Activated B cell treated with CpG ODN at 0.5 μM for 24 hours (primary cell): ENCODE measurements at regions of chr6 and their contacts with region 1.

Region 1: GRCh38 chr6:31680840-31681671 is at the start of gene LY6G5C:
- DNase-seq: peak; percentile 46
- ATAC-seq: peak; percentile 75
- H3K4me3 Mint-ChIP-seq: peak within 1 kb of the TSS; percentile 84
- H3K27ac Mint-ChIP-seq: peak within 1 kb of the TSS; percentile 72
- H3K4me1 Mint-ChIP-seq: peaks cover 40% of the 10 kb centered on the region
- H3K27me3 Mint-ChIP-seq: no peaks in the 10 kb centered on the region
- CTCF ChIP-seq: no peak
- total RNA-seq, gene LY6G5C: 0.29 and 0.73 TPM in 2 replicates

Region 2: GRCh38 chr6:31356946-31357466 is 324.1 kb before region 1 on chr6 and contains the start of gene HLA-B:
- CTCF ChIA-PET with region 1: no interaction called
- POLR2A ChIA-PET with region 1: no interaction called
- intact Hi-C with region 1: no loop called
- DNase-seq: peak; percentile 64
- ATAC-seq: peak; percentile 85
- H3K4me3 Mint-ChIP-seq: peak within 1 kb of the TSS; percentile 95
- H3K27ac Mint-ChIP-seq: peak within 1 kb of the TSS; percentile 100
- H3K4me1 Mint-ChIP-seq: peaks cover 54% of the 10 kb centered on the region
- H3K27me3 Mint-ChIP-seq: no peaks in the 10 kb centered on the region
- CTCF ChIP-seq: no peak
- total RNA-seq, gene HLA-B: 3,667 and 3,668 TPM in 2 replicates

Region 3: DNA sequence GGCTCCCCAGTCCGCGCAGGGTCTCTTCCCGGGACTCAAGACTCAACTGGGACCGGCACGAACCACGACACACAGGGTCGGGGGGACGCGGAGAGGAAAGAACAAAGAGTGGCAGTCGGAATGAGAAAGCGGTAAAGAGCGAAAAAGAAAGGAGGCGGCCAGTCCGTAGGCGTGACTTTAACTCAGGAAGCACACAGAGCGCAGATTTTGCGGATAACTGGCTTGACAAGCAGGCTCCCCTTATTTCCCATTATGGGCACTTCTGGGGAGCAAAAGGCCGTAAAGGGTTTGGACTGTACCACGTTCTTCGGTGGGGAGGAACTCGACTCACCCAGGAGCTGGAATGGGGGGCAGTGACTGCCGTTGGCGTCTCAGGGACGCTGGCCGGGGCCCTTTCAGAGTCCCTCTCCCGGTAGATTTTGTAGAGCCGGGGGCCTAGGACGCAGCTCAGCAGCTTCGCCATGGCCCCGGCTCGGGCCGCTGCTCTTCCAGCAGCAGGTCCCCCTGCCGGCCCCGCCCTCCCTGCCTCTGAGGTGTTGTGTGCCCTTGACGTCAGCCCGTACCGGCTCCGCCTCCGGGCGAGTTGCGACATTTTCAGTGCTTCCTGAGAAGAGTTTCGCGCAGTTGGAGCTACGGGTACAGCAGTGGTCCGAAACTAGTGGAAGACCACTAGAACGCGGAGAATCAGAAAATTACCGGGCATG is 21.9 kb after region 1 on chr6 and contains the start of gene ABHD16A:
- CTCF ChIA-PET with region 1: no interaction called
- POLR2A ChIA-PET with region 1: interaction called, 5 read pairs
- intact Hi-C with region 1: loop called (anchors 2 kb)
- DNase-seq: peak; percentile 94
- ATAC-seq: peak; percentile 93
- H3K4me3 Mint-ChIP-seq: peak within 1 kb of the TSS; percentile 99
- H3K27ac Mint-ChIP-seq: peak within 1 kb of the TSS; percentile 89
- H3K4me1 Mint-ChIP-seq: peaks cover 28% of the 10 kb centered on the region
- H3K27me3 Mint-ChIP-seq: no peaks in the 10 kb centered on the region
- CTCF ChIP-seq: no peak
- total RNA-seq, gene ABHD16A: 49.3 and 59.1 TPM in 2 replicates

Region 4: GRCh38 chr6:31769684-31770371 is 88.8 kb after region 1 on chr6:
- CTCF ChIA-PET with region 1: interaction called, 9 read pairs
- POLR2A ChIA-PET with region 1: interaction called, 5 read pairs
- intact Hi-C with region 1: loop called (anchors 1 kb)
- DNase-seq: peak; percentile 76
- ATAC-seq: peak; percentile 98
- H3K4me3 Mint-ChIP-seq: no peak overlapping the region
- H3K27ac Mint-ChIP-seq: no peak overlapping the region
- H3K4me1 Mint-ChIP-seq: peaks cover 16% of the 10 kb centered on the region
- H3K27me3 Mint-ChIP-seq: no peaks in the 10 kb centered on the region
- CTCF ChIP-seq: no peak

Region 5: DNA sequence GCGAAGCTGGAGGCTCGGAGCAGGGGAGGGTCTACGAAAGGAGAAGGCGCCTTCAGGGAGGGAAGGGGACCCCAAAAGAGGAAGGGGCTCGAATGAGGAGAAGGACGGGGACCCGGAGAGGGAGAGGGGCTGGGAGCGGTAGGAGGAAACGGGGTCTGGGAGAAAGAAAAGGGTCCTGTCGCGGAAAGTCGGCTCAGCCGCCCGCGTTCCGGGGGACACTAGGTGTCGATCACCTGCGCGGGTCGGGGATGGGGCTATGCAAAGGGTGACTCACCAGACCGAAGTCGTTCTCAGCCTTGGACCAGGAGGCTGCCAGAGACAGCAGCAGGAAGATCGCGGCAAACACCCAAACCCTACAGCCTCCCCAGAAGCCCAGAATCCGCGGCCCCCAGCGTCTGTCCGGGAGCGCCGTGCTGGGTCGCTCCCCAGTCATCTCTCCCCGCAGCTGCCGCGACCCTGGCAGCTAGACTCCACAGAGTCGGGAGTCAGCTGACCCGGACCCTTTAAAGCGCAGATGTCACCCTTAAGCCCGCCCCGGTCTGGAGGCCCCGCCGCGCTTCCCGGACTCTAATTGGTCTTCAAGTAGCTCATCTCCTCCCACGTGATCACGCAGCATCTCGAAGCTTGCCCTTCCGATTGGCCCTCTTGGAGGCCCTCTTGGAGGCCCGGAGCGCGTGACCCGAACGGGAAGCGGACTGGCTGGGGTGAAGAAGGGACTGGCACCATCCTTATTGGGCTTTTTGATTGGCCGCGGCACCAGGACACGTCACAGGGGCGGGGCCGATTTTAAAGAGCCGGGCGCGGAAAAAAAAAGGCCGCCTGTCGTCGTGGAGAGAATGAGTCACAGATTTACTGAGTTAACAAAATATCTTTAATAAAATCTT is 181.5 kb after region 1 on chr6 and contains the start of gene NEU1:
- CTCF ChIA-PET with region 1: no interaction called
- POLR2A ChIA-PET with region 1: no interaction called
- intact Hi-C with region 1: loop called (anchors 1 kb)
- DNase-seq: peak; percentile 93
- ATAC-seq: peak; percentile 91
- H3K4me3 Mint-ChIP-seq: peak within 1 kb of the TSS; percentile 95
- H3K27ac Mint-ChIP-seq: peak within 1 kb of the TSS; percentile 93
- H3K4me1 Mint-ChIP-seq: peaks cover 21% of the 10 kb centered on the region
- H3K27me3 Mint-ChIP-seq: no peaks in the 10 kb centered on the region
- CTCF ChIP-seq: no peak
- total RNA-seq, gene NEU1: 18.3 and 19.2 TPM in 2 replicates

Region 6: GRCh38 chr6:31888276-31889258 is 207.5 kb after region 1 on chr6:
- CTCF ChIA-PET with region 1: interaction called, 5 read pairs
- POLR2A ChIA-PET with region 1: no interaction called
- intact Hi-C with region 1: loop called (anchors 2 kb)
- DNase-seq: peak; percentile 56
- ATAC-seq: peak; percentile 50
- H3K4me3 Mint-ChIP-seq: no peak overlapping the region
- H3K27ac Mint-ChIP-seq: no peak overlapping the region
- H3K4me1 Mint-ChIP-seq: no peaks in the 10 kb centered on the region
- H3K27me3 Mint-ChIP-seq: no peaks in the 10 kb centered on the region
- CTCF ChIP-seq: peak; percentile 69

Region 7: DNA sequence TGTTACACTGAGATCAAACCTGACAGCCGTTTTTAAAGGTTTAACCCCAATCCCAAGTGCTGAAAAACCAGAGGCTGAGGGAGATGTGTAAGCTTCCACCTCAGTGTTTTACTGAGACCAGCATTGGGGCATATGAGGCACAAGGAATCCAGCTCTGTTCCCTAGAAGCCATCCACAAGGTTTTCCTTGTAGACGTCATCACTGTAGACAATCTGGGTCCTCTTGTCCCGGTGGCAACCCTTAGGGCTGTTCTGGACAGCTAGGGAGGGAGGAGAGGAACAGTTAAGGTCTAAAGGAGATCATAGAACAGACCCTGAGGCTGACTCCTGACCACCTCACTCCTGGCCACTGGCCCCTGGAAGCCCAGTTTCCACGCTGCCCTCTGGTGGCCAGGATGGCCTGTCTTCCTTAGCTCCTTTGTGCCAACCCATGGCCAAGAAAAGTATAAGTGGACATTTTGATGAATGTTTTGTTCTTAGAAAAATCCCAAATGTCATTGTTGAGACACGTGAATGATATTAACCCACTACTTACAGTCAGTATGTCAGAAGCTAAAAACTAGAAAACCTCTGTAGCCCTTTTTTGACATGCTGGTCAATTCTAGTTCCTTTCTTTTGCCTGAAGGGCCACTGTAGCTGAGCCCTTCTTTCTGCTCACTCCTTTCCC is 271.2 kb after region 1 on chr6:
- CTCF ChIA-PET with region 1: interaction called, 9 read pairs
- POLR2A ChIA-PET with region 1: no interaction called
- intact Hi-C with region 1: loop called (anchors 5 kb)
- DNase-seq: no peak
- ATAC-seq: no peak
- H3K4me3 Mint-ChIP-seq: no peak overlapping the region
- H3K27ac Mint-ChIP-seq: peak overlapping the region; percentile 8
- H3K4me1 Mint-ChIP-seq: peaks cover 1% of the 10 kb centered on the region
- H3K27me3 Mint-ChIP-seq: no peaks in the 10 kb centered on the region
- CTCF ChIP-seq: no peak